ENCODE measurements at regions of chr11 and their contacts with region 1.

Region 1: DNA sequence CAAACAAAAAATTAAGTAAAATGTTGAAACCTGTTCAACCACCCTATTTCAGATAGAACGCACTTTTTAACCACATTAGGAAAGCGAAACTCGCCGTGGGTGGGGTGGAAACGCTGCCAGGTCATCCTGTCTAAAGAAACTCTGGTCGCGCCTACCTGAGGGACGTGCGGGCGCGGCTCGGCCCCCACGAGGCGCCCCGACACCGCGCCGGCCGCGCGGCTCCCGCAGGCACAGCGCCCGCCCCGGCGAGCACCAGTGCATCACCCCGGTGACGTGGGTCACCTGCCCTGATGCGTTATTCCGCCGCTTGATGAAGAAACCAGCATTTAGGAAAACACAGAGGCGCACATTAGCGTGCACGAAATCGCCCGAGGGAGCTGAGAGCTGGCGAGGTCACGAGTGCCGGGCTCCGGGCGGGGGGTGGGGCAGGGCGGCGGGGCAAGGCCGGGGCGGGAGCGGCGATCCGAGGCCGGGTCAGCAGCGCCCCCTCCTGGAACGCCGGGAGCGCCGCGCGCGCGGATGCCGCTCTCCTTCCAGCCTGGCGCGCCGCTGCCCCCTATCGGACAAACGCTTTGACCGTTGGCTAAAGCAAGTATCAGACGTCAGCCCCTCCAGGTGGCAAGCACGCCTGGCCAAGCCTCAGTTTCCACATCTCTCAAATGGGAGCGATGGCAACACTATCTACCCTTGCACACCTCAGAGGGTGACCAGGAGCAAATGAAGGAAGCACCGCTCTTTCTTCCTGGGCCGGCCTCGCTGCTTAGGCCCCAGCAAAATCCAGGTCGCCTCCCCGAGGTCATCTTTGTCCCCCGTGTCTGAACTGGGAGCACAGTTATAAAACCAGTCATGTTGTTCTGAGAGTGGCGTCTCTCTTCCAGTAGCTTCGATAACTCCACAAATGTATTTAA is 15.7 kb upstream of the SNX32 start:
- DNase-seq: peak; percentile 98
- ATAC-seq: peak; percentile 91
- H3K4me3 Mint-ChIP-seq: peak overlapping the region; percentile 74
- H3K27ac Mint-ChIP-seq: peak overlapping the region; percentile 87
- H3K4me1 Mint-ChIP-seq: peaks cover 14% of the 10 kb centered on the region
- H3K27me3 Mint-ChIP-seq: no peaks in the 10 kb centered on the region

Region 2: GRCh38 chr11:65279741-65280440 is 538.2 kb before region 1 on chr11:
- CTCF ChIA-PET with region 1: no interaction called
- POLR2A ChIA-PET with region 1: no interaction called
- intact Hi-C with region 1: no loop called
- DNase-seq: peak; percentile 71
- ATAC-seq: peak; percentile 97
- H3K4me3 Mint-ChIP-seq: no peak overlapping the region
- H3K27ac Mint-ChIP-seq: peak overlapping the region; percentile 79
- H3K4me1 Mint-ChIP-seq: peaks cover 18% of the 10 kb centered on the region
- H3K27me3 Mint-ChIP-seq: no peaks in the 10 kb centered on the region

Region 3: GRCh38 chr11:65720237-65720934 is 97.7 kb before region 1 on chr11 and contains the start of gene RNASEH2C:
- CTCF ChIA-PET with region 1: interaction called, 6 read pairs
- POLR2A ChIA-PET with region 1: no interaction called
- intact Hi-C with region 1: loop called in 1 of 2 experiments (anchors 1 kb)
- DNase-seq: peak; percentile 92
- ATAC-seq: peak; percentile 94
- H3K4me3 Mint-ChIP-seq: peak within 1 kb of the TSS; percentile 84
- H3K27ac Mint-ChIP-seq: peak within 1 kb of the TSS; percentile 88
- H3K4me1 Mint-ChIP-seq: peaks cover 23% of the 10 kb centered on the region
- H3K27me3 Mint-ChIP-seq: no peaks in the 10 kb centered on the region
- total RNA-seq, gene RNASEH2C: 72.5 to 96.8 TPM

Region 4: DNA sequence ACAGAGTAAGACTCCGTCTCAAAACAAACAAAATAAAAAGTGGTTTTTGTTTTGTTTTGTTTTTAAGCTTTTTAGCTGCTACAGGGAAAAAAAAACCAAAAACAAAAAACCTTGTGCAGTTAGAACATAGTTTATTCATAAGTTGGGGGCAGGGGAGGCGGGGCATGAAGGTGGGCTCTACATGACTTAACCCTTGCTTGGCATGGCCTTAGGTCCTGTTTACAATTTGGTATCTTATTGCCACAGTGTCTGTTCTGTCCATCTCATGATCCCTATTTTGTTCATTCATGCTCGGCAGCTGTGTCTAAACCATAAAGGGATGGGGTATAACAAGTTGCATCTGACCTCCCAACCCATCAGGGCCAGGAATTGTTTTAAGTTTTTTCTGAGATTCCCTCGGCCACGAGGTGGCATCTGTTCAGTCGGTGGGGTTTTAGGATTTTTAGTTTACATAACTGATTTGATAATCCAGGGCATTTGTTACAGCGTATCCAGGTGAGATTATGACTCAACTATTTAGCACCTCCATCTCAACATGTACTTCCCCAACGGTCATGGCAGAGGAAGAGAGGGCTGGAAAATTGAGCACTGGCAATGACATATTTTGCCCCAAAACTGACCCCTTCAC is 44.2 kb before region 1 on chr11:
- CTCF ChIA-PET with region 1: interaction called, 74 read pairs
- POLR2A ChIA-PET with region 1: no interaction called
- intact Hi-C with region 1: loop called in 1 of 2 experiments (anchors 10 kb)
- DNase-seq: no peak
- ATAC-seq: peak; percentile 23
- H3K4me3 Mint-ChIP-seq: no peak overlapping the region
- H3K27ac Mint-ChIP-seq: peak overlapping the region; percentile 15
- H3K4me1 Mint-ChIP-seq: peaks cover 26% of the 10 kb centered on the region
- H3K27me3 Mint-ChIP-seq: no peaks in the 10 kb centered on the region

Region 5: GRCh38 chr11:65791691-65792213 is 26.3 kb before region 1 on chr11:
- CTCF ChIA-PET with region 1: interaction called, 12 read pairs
- POLR2A ChIA-PET with region 1: no interaction called
- intact Hi-C with region 1: no loop called
- DNase-seq: no peak
- ATAC-seq: no peak
- H3K4me3 Mint-ChIP-seq: no peak overlapping the region
- H3K27ac Mint-ChIP-seq: no peak overlapping the region
- H3K4me1 Mint-ChIP-seq: peaks cover 6% of the 10 kb centered on the region
- H3K27me3 Mint-ChIP-seq: peaks cover 23% of the 10 kb centered on the region

Region 6: DNA sequence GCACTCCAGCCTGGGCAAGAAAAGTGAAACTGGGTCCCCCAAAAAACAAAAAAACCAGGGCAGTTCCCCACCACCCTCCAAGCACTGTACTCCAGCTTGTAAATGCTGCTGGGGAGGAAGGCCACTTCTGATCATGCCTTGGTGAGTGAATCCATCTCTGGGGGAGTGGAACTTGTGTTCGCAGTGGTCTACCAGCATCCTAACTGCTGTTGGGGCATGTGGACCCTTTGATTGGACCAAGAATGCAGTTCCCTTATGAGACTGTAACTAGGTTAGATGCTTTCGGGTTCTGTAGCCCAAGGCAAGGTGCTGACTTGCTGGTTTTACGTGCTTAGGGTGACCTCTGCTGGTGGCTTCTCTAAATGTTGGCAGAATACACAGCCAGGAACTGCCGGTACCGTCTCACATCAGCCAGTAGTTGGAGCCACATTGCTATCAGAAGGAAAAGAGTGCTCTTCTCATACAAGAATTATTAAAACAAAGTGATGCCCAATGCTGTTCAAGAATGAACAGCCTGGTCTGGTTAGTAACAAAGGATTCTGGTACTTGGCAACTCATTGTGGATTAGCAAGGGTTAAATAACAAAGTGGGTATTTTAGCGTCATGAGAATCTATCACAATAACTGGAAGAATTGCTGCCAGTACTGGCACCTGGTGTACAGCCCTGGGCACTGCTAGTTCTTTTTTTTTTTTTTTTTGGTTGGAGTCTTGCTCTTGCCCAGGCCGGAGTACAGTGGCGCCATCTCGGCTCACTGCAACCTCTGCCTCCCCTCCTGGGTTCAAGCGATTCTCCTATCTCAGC is 170.9 kb after region 1 on chr11:
- CTCF ChIA-PET with region 1: no interaction called
- POLR2A ChIA-PET with region 1: no interaction called
- intact Hi-C with region 1: loop called in 1 of 2 experiments (anchors 1 kb)
- DNase-seq: peak; percentile 95
- ATAC-seq: peak; percentile 99
- H3K4me3 Mint-ChIP-seq: no peak overlapping the region
- H3K27ac Mint-ChIP-seq: peak overlapping the region; percentile 59
- H3K4me1 Mint-ChIP-seq: peaks cover 2% of the 10 kb centered on the region
- H3K27me3 Mint-ChIP-seq: no peaks in the 10 kb centered on the region